CD8-positive, alpha-beta T cell (primary cell): ENCODE measurements at regions of chr12 and their contacts with region 1.

Region 1: GRCh38 chr12:96399919-96400797 is at the start of gene CDK17:
- DNase-seq: peak; percentile 79 to 97 (median 90)
- ATAC-seq: peak; percentile 68
- H3K4me3 ChIP-seq: peak within 1 kb of the TSS; percentile 75 to 84
- H3K4me3 Mint-ChIP-seq: peak within 1 kb of the TSS; percentile 93
- H3K27ac ChIP-seq: peak within 1 kb of the TSS; percentile 84 to 85
- H3K27ac Mint-ChIP-seq: peak within 1 kb of the TSS; percentile 98
- H3K4me1 ChIP-seq: peaks cover 30% of the 10 kb centered on the region
- H3K4me1 Mint-ChIP-seq: peaks cover 47% of the 10 kb centered on the region
- H3K27me3 ChIP-seq: no peaks in the 10 kb centered on the region
- H3K27me3 Mint-ChIP-seq: no peaks in the 10 kb centered on the region
- CTCF ChIP-seq: no peak
- total RNA-seq, gene CDK17: 150 to 160 TPM

Region 2: GRCh38 chr12:95942524-95943329 is 457.4 kb before region 1 on chr12 and contains the start of gene CCDC38:
- CTCF ChIA-PET with region 1: no interaction called
- POLR2A ChIA-PET with region 1: no interaction called
- intact Hi-C with region 1: loop called in 1 of 2 experiments (anchors 2 kb)
- DNase-seq: peak; percentile 63 to 92 (median 82)
- ATAC-seq: peak; percentile 92
- H3K4me3 ChIP-seq: peak within 1 kb of the TSS; percentile 67 to 83
- H3K4me3 Mint-ChIP-seq: peak within 1 kb of the TSS; percentile 96
- H3K27ac ChIP-seq: peak within 1 kb of the TSS; percentile 71 to 79
- H3K27ac Mint-ChIP-seq: peak within 1 kb of the TSS; percentile 92
- H3K4me1 ChIP-seq: peaks cover 11% of the 10 kb centered on the region
- H3K4me1 Mint-ChIP-seq: peaks cover 10% of the 10 kb centered on the region
- H3K27me3 ChIP-seq: no peaks in the 10 kb centered on the region
- H3K27me3 Mint-ChIP-seq: no peaks in the 10 kb centered on the region
- CTCF ChIP-seq: no peak
- total RNA-seq, gene CCDC38: not detected

Region 3: GRCh38 chr12:96208801-96209549 is 191.2 kb before region 1 on chr12:
- CTCF ChIA-PET with region 1: interaction called, 14 read pairs
- POLR2A ChIA-PET with region 1: interaction called, 3 read pairs
- intact Hi-C with region 1: loop called in 1 of 2 experiments (anchors 5 kb)
- DNase-seq: peak in 1 of 9 experiments; percentile 48
- ATAC-seq: no peak
- H3K4me3 ChIP-seq: no peak overlapping the region
- H3K4me3 Mint-ChIP-seq: peak overlapping the region; percentile 30
- H3K27ac ChIP-seq: no peak overlapping the region
- H3K27ac Mint-ChIP-seq: peak overlapping the region; percentile 6
- H3K4me1 ChIP-seq: peaks cover 84% of the 10 kb centered on the region
- H3K4me1 Mint-ChIP-seq: peaks cover 93% of the 10 kb centered on the region
- H3K27me3 ChIP-seq: no peaks in the 10 kb centered on the region
- H3K27me3 Mint-ChIP-seq: no peaks in the 10 kb centered on the region
- CTCF ChIP-seq: no peak

Region 4: DNA sequence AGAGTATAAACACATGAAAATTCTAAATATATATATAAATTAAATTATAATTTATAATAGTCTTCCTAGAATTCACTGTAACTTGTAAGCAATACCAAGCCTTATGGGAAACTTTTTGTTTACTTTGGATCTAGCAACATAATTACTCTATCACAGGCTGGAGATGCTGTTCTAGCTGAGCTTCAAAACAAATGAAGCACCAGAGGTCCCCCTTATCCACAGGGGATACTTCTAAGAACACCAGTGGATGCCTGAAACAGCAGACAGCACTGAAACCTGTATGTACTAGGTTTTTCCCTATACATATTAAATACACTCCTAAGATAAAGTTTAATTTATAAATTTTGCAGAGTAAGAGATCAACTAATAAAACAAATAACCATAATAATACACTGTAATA is 96.5 kb before region 1 on chr12:
- CTCF ChIA-PET with region 1: interaction called, 14 read pairs
- POLR2A ChIA-PET with region 1: interaction called, 10 read pairs
- intact Hi-C with region 1: loop called in 1 of 2 experiments (anchors 5 kb)
- DNase-seq: no peak
- ATAC-seq: no peak
- H3K4me3 ChIP-seq: no peak overlapping the region
- H3K4me3 Mint-ChIP-seq: no peak overlapping the region
- H3K27ac ChIP-seq: no peak overlapping the region
- H3K27ac Mint-ChIP-seq: no peak overlapping the region
- H3K4me1 ChIP-seq: peaks cover 3% of the 10 kb centered on the region
- H3K4me1 Mint-ChIP-seq: peaks cover 28% of the 10 kb centered on the region
- H3K27me3 ChIP-seq: no peaks in the 10 kb centered on the region
- H3K27me3 Mint-ChIP-seq: no peaks in the 10 kb centered on the region
- CTCF ChIP-seq: no peak

Region 5: GRCh38 chr12:96361074-96361473 is 39.1 kb before region 1 on chr12:
- CTCF ChIA-PET with region 1: interaction called, 7 read pairs
- POLR2A ChIA-PET with region 1: interaction called, 5 read pairs
- intact Hi-C with region 1: loop called (anchors 2 to 5 kb)
- DNase-seq: no peak
- ATAC-seq: no peak
- H3K4me3 ChIP-seq: no peak overlapping the region
- H3K4me3 Mint-ChIP-seq: no peak overlapping the region
- H3K27ac ChIP-seq: no peak overlapping the region
- H3K27ac Mint-ChIP-seq: no peak overlapping the region
- H3K4me1 ChIP-seq: peaks cover 40% of the 10 kb centered on the region
- H3K4me1 Mint-ChIP-seq: peaks cover 73% of the 10 kb centered on the region
- H3K27me3 ChIP-seq: no peaks in the 10 kb centered on the region
- H3K27me3 Mint-ChIP-seq: no peaks in the 10 kb centered on the region
- CTCF ChIP-seq: no peak

Region 6: GRCh38 chr12:96434107-96434506 is 33.9 kb after region 1 on chr12:
- CTCF ChIA-PET with region 1: interaction called, 3 read pairs
- POLR2A ChIA-PET with region 1: interaction called, 3 read pairs
- intact Hi-C with region 1: loop called (anchors 1 to 2 kb)
- DNase-seq: peak; percentile 37 to 96 (median 67)
- ATAC-seq: peak; percentile 97
- H3K4me3 ChIP-seq: peak overlapping the region in 1 of 2 experiments; percentile 24
- H3K4me3 Mint-ChIP-seq: peak overlapping the region; percentile 45
- H3K27ac ChIP-seq: peak overlapping the region; percentile 69 to 77
- H3K27ac Mint-ChIP-seq: peak overlapping the region; percentile 87
- H3K4me1 ChIP-seq: peaks cover 30% of the 10 kb centered on the region
- H3K4me1 Mint-ChIP-seq: peaks cover 36% of the 10 kb centered on the region
- H3K27me3 ChIP-seq: no peaks in the 10 kb centered on the region
- H3K27me3 Mint-ChIP-seq: no peaks in the 10 kb centered on the region
- CTCF ChIP-seq: no peak

Region 7: GRCh38 chr12:96516472-96517430 is 116.6 kb after region 1 on chr12:
- CTCF ChIA-PET with region 1: interaction called, 74 read pairs
- POLR2A ChIA-PET with region 1: interaction called, 19 read pairs
- intact Hi-C with region 1: loop called (anchors 1 to 2 kb)
- DNase-seq: peak; percentile 73 to 91 (median 88)
- ATAC-seq: peak; percentile 89
- H3K4me3 ChIP-seq: no peak overlapping the region
- H3K4me3 Mint-ChIP-seq: peak overlapping the region; percentile 50
- H3K27ac ChIP-seq: no peak overlapping the region
- H3K27ac Mint-ChIP-seq: no peak overlapping the region
- H3K4me1 ChIP-seq: peaks cover 11% of the 10 kb centered on the region
- H3K4me1 Mint-ChIP-seq: peaks cover 11% of the 10 kb centered on the region
- H3K27me3 ChIP-seq: no peaks in the 10 kb centered on the region
- H3K27me3 Mint-ChIP-seq: no peaks in the 10 kb centered on the region
- CTCF ChIP-seq: peak; percentile 91